ENCODE measurements at regions of chr15 and their contacts with region 1.

Region 1: GRCh38 chr15:72098040-72098439 is 19.9 kb downstream of the MYO9A start:
- DNase-seq: no peak
- H3K4me3 ChIP-seq: no peak overlapping the region
- H3K27ac ChIP-seq: no peak overlapping the region
- H3K4me1 ChIP-seq: no peaks in the 10 kb centered on the region
- H3K27me3 ChIP-seq: no peaks in the 10 kb centered on the region
- CTCF ChIP-seq: no peak
- POLR2A ChIP-seq: no peak

Region 2: GRCh38 chr15:72050700-72051099 is 47.3 kb before region 1 on chr15:
- CTCF ChIA-PET with region 1: no interaction called
- POLR2A ChIA-PET with region 1: no interaction called
- dilution Hi-C with region 1: no loop called
- intact Hi-C with region 1: no loop called
- DNase-seq: no peak
- H3K4me3 ChIP-seq: no peak overlapping the region
- H3K27ac ChIP-seq: no peak overlapping the region
- H3K4me1 ChIP-seq: no peaks in the 10 kb centered on the region
- H3K27me3 ChIP-seq: no peaks in the 10 kb centered on the region
- CTCF ChIP-seq: no peak
- POLR2A ChIP-seq: no peak

Region 3: GRCh38 chr15:72117486-72118399 is 19.7 kb after region 1 on chr15 and contains the start of gene MYO9A:
- CTCF ChIA-PET with region 1: no interaction called
- POLR2A ChIA-PET with region 1: no interaction called
- dilution Hi-C with region 1: no loop called
- intact Hi-C with region 1: loop called (anchors 2 kb)
- DNase-seq: peak; percentile 99
- H3K4me3 ChIP-seq: peak within 1 kb of the TSS; percentile 62 to 93 (median 84)
- H3K27ac ChIP-seq: peak within 1 kb of the TSS; percentile 90
- H3K4me1 ChIP-seq: peaks cover 18% of the 10 kb centered on the region
- H3K27me3 ChIP-seq: no peaks in the 10 kb centered on the region
- CTCF ChIP-seq: peak in 1 of 2 donors; percentile 13
- POLR2A ChIP-seq: peak; percentile 55
- total RNA-seq, gene MYO9A: 30.3 and 30.6 TPM in 2 replicates

Region 4: GRCh38 chr15:72706266-72706665 is 608.2 kb after region 1 on chr15:
- CTCF ChIA-PET with region 1: no interaction called
- POLR2A ChIA-PET with region 1: no interaction called
- dilution Hi-C with region 1: no loop called
- intact Hi-C with region 1: no loop called
- DNase-seq: no peak
- H3K4me3 ChIP-seq: no peak overlapping the region
- H3K27ac ChIP-seq: no peak overlapping the region
- H3K4me1 ChIP-seq: no peaks in the 10 kb centered on the region
- H3K27me3 ChIP-seq: no peaks in the 10 kb centered on the region
- CTCF ChIP-seq: no peak
- POLR2A ChIP-seq: no peak